PC-9 (cell line): ENCODE measurements at regions of chr7 and their contacts with region 1.

Region 1: GRCh38 chr7:95690367-95690947 is 81.9 kb upstream of the DYNC1I1 start:
- DNase-seq: peak; percentile 37
- H3K4me3 ChIP-seq: no peak overlapping the region
- H3K27ac ChIP-seq: no peak overlapping the region
- H3K4me1 ChIP-seq: peaks cover 15% of the 10 kb centered on the region
- H3K27me3 ChIP-seq: no peaks in the 10 kb centered on the region
- CTCF ChIP-seq: peak; percentile 85

Region 2: GRCh38 chr7:93715234-93715633 is 1975.2 kb before region 1 on chr7:
- CTCF ChIA-PET with region 1: no interaction called
- POLR2A ChIA-PET with region 1: no interaction called
- intact Hi-C with region 1: loop called (anchors 1 kb)
- DNase-seq: peak in 1 of 2 experiments; percentile 37
- H3K4me3 ChIP-seq: no peak overlapping the region
- H3K27ac ChIP-seq: no peak overlapping the region
- H3K4me1 ChIP-seq: no peaks in the 10 kb centered on the region
- H3K27me3 ChIP-seq: no peaks in the 10 kb centered on the region
- CTCF ChIP-seq: peak; percentile 53

Region 3: DNA sequence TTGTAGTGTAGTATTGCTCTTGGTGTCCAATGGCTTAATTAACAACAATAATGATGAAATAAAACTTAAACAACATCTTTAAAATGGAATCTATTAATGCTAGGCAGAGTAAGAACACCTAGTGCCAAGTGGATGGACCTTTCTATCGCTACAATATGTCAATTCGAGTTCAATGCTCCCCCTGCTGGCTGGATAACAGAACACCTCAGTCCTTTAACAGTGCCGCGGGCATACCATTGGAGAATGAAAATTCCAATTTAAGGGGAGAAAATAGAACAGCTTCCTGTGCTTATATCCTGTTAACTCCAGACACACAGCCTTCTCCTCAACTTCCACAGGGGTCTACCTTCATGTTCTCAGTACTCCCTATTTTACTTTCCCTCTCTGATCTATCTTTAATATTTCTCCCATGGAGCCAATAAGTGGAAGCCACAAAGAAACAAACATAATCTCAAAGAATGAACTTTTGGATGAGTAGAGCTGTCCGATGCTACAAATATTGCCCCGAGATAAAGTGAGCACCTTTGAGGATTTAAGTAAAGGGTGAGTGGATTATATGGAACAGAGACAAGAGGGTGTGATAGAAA is 1254.3 kb before region 1 on chr7:
- CTCF ChIA-PET with region 1: interaction called, 3 read pairs
- POLR2A ChIA-PET with region 1: no interaction called
- intact Hi-C with region 1: loop called (anchors 5 kb)
- DNase-seq: peak; percentile 37 to 48
- H3K4me3 ChIP-seq: no peak overlapping the region
- H3K27ac ChIP-seq: no peak overlapping the region
- H3K4me1 ChIP-seq: no peaks in the 10 kb centered on the region
- H3K27me3 ChIP-seq: no peaks in the 10 kb centered on the region
- CTCF ChIP-seq: peak; percentile 88

Region 4: GRCh38 chr7:95511716-95512260 is 178.7 kb before region 1 on chr7:
- CTCF ChIA-PET with region 1: interaction called, 53 read pairs
- POLR2A ChIA-PET with region 1: no interaction called
- intact Hi-C with region 1: no loop called
- DNase-seq: peak; percentile 36 to 53
- H3K4me3 ChIP-seq: no peak overlapping the region
- H3K27ac ChIP-seq: no peak overlapping the region
- H3K4me1 ChIP-seq: 0 out of 2 replicates have a peak, but pooled peaks cover 4% of the 10 kb centered on the region
- H3K27me3 ChIP-seq: no peaks in the 10 kb centered on the region
- CTCF ChIP-seq: peak; percentile 84

Region 5: GRCh38 chr7:95545078-95545498 is 145.4 kb before region 1 on chr7:
- CTCF ChIA-PET with region 1: interaction called, 28 read pairs
- POLR2A ChIA-PET with region 1: no interaction called
- intact Hi-C with region 1: loop called (anchors 1 kb)
- DNase-seq: peak; percentile 44 to 57
- H3K4me3 ChIP-seq: peak overlapping the region; percentile 47; the same call in 1 of the 2 replicates
- H3K27ac ChIP-seq: peak overlapping the region; percentile 56
- H3K4me1 ChIP-seq: peaks cover 13% of the 10 kb centered on the region
- H3K27me3 ChIP-seq: no peaks in the 10 kb centered on the region
- CTCF ChIP-seq: peak; percentile 71

Region 6: GRCh38 chr7:95649546-95649945 is 40.9 kb before region 1 on chr7:
- CTCF ChIA-PET with region 1: no interaction called
- POLR2A ChIA-PET with region 1: no interaction called
- intact Hi-C with region 1: no loop called
- DNase-seq: no peak
- H3K4me3 ChIP-seq: no peak overlapping the region
- H3K27ac ChIP-seq: no peak overlapping the region
- H3K4me1 ChIP-seq: no peaks in the 10 kb centered on the region
- H3K27me3 ChIP-seq: no peaks in the 10 kb centered on the region
- CTCF ChIP-seq: no peak